ENCODE measurements at regions of chr22 and their contacts with region 1.

Region 1: GRCh38 chr22:43088979-43089717 is at the start of gene TTLL1:
- DNase-seq: peak; percentile 75 to 99 (median 89)

Region 2: GRCh38 chr22:42780070-42780540 is 309.0 kb before region 1 on chr22:
- intact Hi-C with region 1: loop called (anchors 1 kb)
- DNase-seq: peak in 1 of 10 donors; percentile 47

Region 3: DNA sequence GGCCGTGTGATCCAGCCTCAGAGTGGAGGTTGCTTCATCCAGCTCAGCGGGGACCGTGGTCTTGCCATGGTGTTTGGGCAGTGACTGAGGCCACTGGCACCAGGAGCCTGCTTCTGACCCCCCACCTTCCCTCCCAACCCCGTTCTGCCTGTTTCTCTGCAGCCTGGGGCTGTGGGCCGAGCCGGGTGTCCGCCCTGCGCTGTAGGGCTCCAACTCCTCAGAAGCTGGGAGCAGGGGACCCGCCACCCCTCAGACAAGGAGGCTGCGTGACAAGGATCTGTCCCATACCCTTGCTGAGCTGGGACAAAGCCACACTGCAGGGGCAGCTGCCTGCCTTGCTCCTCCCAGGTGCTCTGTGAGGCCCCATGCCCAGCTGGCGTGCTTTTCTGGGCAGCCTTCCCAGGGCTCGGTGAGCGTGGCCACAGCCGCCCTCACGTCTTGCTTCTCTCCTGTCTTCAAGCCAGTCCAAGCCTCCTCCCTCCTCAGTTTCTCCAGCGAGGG is 220.3 kb before region 1 on chr22:
- intact Hi-C with region 1: loop called (anchors 5 kb)
- DNase-seq: peak; percentile 47 to 94 (median 62)

Region 4: DNA sequence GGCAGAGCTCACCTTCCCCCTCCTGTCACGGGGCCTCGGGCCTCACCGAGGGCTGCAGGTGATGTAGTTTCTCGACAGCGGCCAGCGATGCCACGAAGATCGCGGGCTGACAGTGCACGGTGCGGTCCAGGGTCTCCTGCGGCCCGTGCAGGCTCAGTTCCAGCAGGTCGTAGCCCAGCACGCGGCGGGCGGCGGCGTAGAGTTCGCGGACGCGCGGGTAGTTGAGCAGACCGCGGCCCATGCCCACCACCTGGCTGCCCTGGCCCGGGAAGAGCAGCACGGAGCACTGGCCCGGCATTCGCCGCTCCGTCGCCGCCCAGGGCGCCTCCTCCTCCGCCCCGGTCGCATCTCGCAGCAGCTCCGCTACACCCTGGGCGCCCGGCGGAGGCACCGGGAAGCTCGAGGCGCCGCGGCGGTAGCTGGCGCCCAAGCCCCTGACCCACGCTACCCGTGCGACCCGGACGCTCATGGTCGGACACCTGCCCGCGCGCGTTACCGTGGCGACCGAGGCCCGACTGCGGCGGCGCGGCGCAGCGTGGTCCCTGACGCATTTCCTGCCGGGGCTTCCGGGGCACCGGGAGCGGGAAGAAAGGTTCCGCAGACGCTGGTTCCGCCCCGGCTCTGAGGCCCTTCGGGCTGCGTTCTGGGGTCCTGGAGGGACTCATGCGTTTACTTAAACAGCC is 53.9 kb after region 1 on chr22 and contains the start of gene MCAT:
- intact Hi-C with region 1: loop called (anchors 2 kb)
- DNase-seq: peak; percentile 73 to 97 (median 86)

Measured in posterior cingulate gyrus (tissue), 11 donors.